B cell (primary cell): ENCODE measurements at regions of chr10 and their contacts with region 1.

Region 1: GRCh38 chr10:101569838-101570766 is 18.0 kb downstream of the POLL start:
- DNase-seq: peak; percentile 89
- ATAC-seq: peak; percentile 88
- H3K4me3 ChIP-seq: peak overlapping the region; percentile 42 to 69 (median 64)
- H3K4me3 Mint-ChIP-seq: peak overlapping the region; percentile 86
- H3K27ac ChIP-seq: no peak overlapping the region
- H3K27ac Mint-ChIP-seq: peak overlapping the region; percentile 32
- H3K4me1 ChIP-seq: peaks cover 21 to 28% of the 10 kb centered on the region in 2 donors
- H3K4me1 Mint-ChIP-seq: peaks cover 17% of the 10 kb centered on the region
- H3K27me3 ChIP-seq: peaks cover 0 to 47% (median 33%) of the 10 kb centered on the region in 4 experiments
- H3K27me3 Mint-ChIP-seq: peaks cover 39% of the 10 kb centered on the region
- CTCF ChIP-seq: peak; percentile 85

Region 2: DNA sequence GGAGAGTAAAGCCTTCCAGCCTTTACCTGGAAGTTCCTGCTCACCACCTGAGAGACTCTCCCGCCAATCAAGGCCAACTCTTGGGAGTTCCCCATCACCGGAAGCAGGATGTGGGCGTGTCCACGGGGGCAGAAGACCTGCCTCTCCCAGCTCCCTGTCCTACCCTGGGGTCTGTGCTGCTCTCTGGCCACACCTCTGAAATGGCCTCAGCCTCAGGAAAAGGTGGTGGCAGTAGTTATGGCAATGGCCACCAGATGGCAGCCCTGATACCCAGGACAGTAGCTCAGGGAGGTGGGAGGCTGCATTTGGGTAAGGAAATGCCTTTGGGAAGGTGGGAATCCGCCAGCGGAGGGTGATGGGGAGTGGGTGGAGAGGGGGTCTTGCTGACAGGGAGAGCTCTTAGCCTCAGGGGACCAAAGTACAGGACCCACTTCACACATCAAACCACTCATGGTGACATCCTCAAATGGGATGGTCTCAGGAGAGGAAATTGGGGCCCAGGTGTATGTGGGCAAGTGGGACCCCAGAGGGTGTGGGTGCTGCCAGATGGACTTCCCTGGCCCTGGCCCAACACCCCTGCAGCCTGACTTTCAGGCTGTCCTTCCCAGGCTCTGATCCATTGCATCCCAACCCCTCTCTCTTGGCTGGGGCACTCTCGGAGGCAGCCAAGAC is 474.4 kb before region 1 on chr10:
- CTCF ChIA-PET with region 1: interaction called, 3 read pairs
- POLR2A ChIA-PET with region 1: no interaction called
- intact Hi-C with region 1: loop called (anchors 5 kb)
- DNase-seq: peak; percentile 76
- ATAC-seq: peak; percentile 92
- H3K4me3 ChIP-seq: no peak overlapping the region
- H3K4me3 Mint-ChIP-seq: no peak overlapping the region
- H3K27ac ChIP-seq: no peak overlapping the region
- H3K27ac Mint-ChIP-seq: no peak overlapping the region
- H3K4me1 ChIP-seq: no peaks in the 10 kb centered on the region
- H3K4me1 Mint-ChIP-seq: peaks cover 2% of the 10 kb centered on the region
- H3K27me3 ChIP-seq: peaks cover 0 to 83% (median 10%) of the 10 kb centered on the region in 4 experiments
- H3K27me3 Mint-ChIP-seq: peaks cover 58% of the 10 kb centered on the region
- CTCF ChIP-seq: peak; percentile 87

Region 3: GRCh38 chr10:101172741-101173140 is 397.4 kb before region 1 on chr10:
- CTCF ChIA-PET with region 1: no interaction called
- POLR2A ChIA-PET with region 1: no interaction called
- intact Hi-C with region 1: no loop called
- DNase-seq: no peak
- ATAC-seq: no peak
- H3K4me3 ChIP-seq: no peak overlapping the region
- H3K4me3 Mint-ChIP-seq: no peak overlapping the region
- H3K27ac ChIP-seq: no peak overlapping the region
- H3K27ac Mint-ChIP-seq: no peak overlapping the region
- H3K4me1 ChIP-seq: no peaks in the 10 kb centered on the region
- H3K4me1 Mint-ChIP-seq: peaks cover 2% of the 10 kb centered on the region
- H3K27me3 ChIP-seq: peaks cover 0 to 32% (median 3%) of the 10 kb centered on the region in 4 experiments
- H3K27me3 Mint-ChIP-seq: peaks cover 49% of the 10 kb centered on the region
- CTCF ChIP-seq: no peak

Region 4: DNA sequence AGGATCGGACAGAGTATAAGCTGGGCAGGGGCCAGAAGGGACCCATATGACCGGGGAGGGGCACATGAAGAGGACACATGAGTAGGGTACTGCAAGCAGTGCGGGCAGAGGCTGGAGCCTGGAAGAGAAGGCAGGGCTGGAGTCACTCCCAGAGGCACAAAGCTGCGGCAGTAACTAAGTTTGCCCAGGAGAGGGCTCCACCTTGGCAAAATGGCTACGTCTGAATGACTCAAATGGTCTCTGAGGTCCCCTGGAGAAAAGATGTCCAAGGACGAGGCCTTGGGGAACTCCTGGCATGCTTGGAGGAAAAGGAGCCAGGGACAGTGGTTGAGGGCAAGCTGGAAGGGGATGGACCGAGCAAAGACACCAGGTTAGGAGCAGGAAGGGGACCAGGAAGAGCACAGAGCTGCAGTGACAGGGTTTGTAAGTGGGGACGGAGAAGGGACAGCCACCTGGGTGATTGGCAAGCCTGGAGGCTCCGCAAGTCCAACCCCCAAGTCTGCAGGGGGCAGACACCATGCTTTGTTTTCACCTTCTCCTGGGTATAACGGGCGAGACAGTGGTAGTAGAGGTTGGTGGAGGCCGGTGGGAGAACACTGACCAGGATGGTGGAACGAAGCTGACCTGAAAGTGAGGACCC is 297.8 kb before region 1 on chr10:
- CTCF ChIA-PET with region 1: interaction called, 26 read pairs
- POLR2A ChIA-PET with region 1: no interaction called
- intact Hi-C with region 1: loop called (anchors 1 kb)
- DNase-seq: peak; percentile 67
- ATAC-seq: peak; percentile 57
- H3K4me3 ChIP-seq: no peak overlapping the region
- H3K4me3 Mint-ChIP-seq: no peak overlapping the region
- H3K27ac ChIP-seq: no peak overlapping the region
- H3K27ac Mint-ChIP-seq: no peak overlapping the region
- H3K4me1 ChIP-seq: no peaks in the 10 kb centered on the region
- H3K4me1 Mint-ChIP-seq: peaks cover 2% of the 10 kb centered on the region
- H3K27me3 ChIP-seq: peaks cover 0 to 15% (median 4%) of the 10 kb centered on the region in 4 experiments
- H3K27me3 Mint-ChIP-seq: peaks cover 33% of the 10 kb centered on the region
- CTCF ChIP-seq: peak; percentile 74

Region 5: DNA sequence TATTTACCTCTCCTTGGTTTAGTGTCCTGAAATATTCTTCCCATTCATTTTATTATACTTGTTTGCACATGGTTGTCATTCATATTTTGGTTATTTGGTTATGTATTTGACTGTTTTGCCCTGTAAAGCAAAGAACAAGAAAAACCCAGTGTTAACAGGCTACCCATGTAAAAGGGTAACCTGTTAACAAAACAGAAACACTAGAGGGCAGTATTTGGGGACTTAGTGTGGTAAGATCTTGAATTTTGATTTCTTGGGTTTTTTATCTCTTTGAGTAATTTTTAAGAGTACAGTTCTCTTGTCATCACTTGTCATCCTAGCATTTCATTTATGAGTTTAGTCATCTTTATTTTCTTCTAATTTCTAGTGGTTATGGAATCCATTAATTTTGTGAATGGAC is 33.3 kb before region 1 on chr10:
- CTCF ChIA-PET with region 1: interaction called, 44 read pairs
- POLR2A ChIA-PET with region 1: no interaction called
- intact Hi-C with region 1: no loop called
- DNase-seq: peak; percentile 39
- ATAC-seq: no peak
- H3K4me3 ChIP-seq: no peak overlapping the region
- H3K4me3 Mint-ChIP-seq: no peak overlapping the region
- H3K27ac ChIP-seq: no peak overlapping the region
- H3K27ac Mint-ChIP-seq: no peak overlapping the region
- H3K4me1 ChIP-seq: no peaks in the 10 kb centered on the region
- H3K4me1 Mint-ChIP-seq: no peaks in the 10 kb centered on the region
- H3K27me3 ChIP-seq: no peaks in the 10 kb centered on the region
- H3K27me3 Mint-ChIP-seq: no peaks in the 10 kb centered on the region
- CTCF ChIP-seq: peak; percentile 68

Region 6: GRCh38 chr10:101587725-101588653 is 17.9 kb after region 1 on chr10 and contains the starts of genes DPCD and POLL:
- CTCF ChIA-PET with region 1: interaction called, 7 read pairs
- POLR2A ChIA-PET with region 1: interaction called, 3 read pairs
- intact Hi-C with region 1: loop called (anchors 1 kb)
- DNase-seq: peak; percentile 92
- ATAC-seq: peak; percentile 96
- H3K4me3 ChIP-seq: peak within 1 kb of the TSS; percentile 57 to 95 (median 91)
- H3K4me3 Mint-ChIP-seq: peak within 1 kb of the TSS; percentile 96
- H3K27ac ChIP-seq: peak within 1 kb of the TSS; percentile 70 to 86
- H3K27ac Mint-ChIP-seq: peak within 1 kb of the TSS; percentile 85
- H3K4me1 ChIP-seq: peaks cover 15 to 19% of the 10 kb centered on the region in 2 donors
- H3K4me1 Mint-ChIP-seq: peaks cover 21% of the 10 kb centered on the region
- H3K27me3 ChIP-seq: no peaks in the 10 kb centered on the region
- H3K27me3 Mint-ChIP-seq: no peaks in the 10 kb centered on the region
- CTCF ChIP-seq: no peak
- total RNA-seq, gene DPCD: 1.6 and 2.2 TPM in 2 replicates
- total RNA-seq, gene POLL: 46.7 TPM in 2 replicates